CD4-positive, alpha-beta T cell (primary cell): ENCODE measurements at regions of chr6 and their contacts with region 1.

Region 1: GRCh38 chr6:26537846-26538571 is at the start of gene HMGN4:
- DNase-seq: peak; percentile 66 to 97 (median 76)
- ATAC-seq: peak; percentile 70
- H3K4me3 ChIP-seq: peak within 1 kb of the TSS; percentile 93
- H3K4me3 Mint-ChIP-seq: peak within 1 kb of the TSS; percentile 94
- H3K27ac ChIP-seq: peak within 1 kb of the TSS; percentile 84 to 91
- H3K27ac Mint-ChIP-seq: peak within 1 kb of the TSS; percentile 98
- H3K4me1 ChIP-seq: peaks cover 51% of the 10 kb centered on the region
- H3K4me1 Mint-ChIP-seq: peaks cover 57% of the 10 kb centered on the region
- H3K27me3 ChIP-seq: no peaks in the 10 kb centered on the region
- H3K27me3 Mint-ChIP-seq: peaks cover 13% of the 10 kb centered on the region
- CTCF ChIP-seq: no peak
- total RNA-seq, gene HMGN4: 22.7 to 24.8 TPM

Region 2: GRCh38 chr6:26175428-26176181 is 362.4 kb before region 1 on chr6:
- CTCF ChIA-PET with region 1: no interaction called
- POLR2A ChIA-PET with region 1: interaction called, 18 read pairs
- intact Hi-C with region 1: no loop called
- DNase-seq: peak in 11 of 14 experiments; percentile 13 to 85 (median 54)
- ATAC-seq: no peak
- H3K4me3 ChIP-seq: no peak overlapping the region
- H3K4me3 Mint-ChIP-seq: peak overlapping the region; percentile 83
- H3K27ac ChIP-seq: peak overlapping the region in 1 of 2 donors; percentile 41
- H3K27ac Mint-ChIP-seq: peak overlapping the region; percentile 93
- H3K4me1 ChIP-seq: peaks cover 17% of the 10 kb centered on the region
- H3K4me1 Mint-ChIP-seq: peaks cover 53% of the 10 kb centered on the region
- H3K27me3 ChIP-seq: no peaks in the 10 kb centered on the region
- H3K27me3 Mint-ChIP-seq: no peaks in the 10 kb centered on the region
- CTCF ChIP-seq: peak; percentile 87

Region 3: GRCh38 chr6:26285143-26286134 is 252.6 kb before region 1 on chr6:
- CTCF ChIA-PET with region 1: no interaction called
- POLR2A ChIA-PET with region 1: interaction called, 15 read pairs
- intact Hi-C with region 1: no loop called
- DNase-seq: peak; percentile 85 to 99 (median 92)
- ATAC-seq: peak; percentile 82
- H3K4me3 ChIP-seq: peak overlapping the region; percentile 62
- H3K4me3 Mint-ChIP-seq: peak overlapping the region; percentile 87
- H3K27ac ChIP-seq: peak overlapping the region; percentile 82 to 85
- H3K27ac Mint-ChIP-seq: peak overlapping the region; percentile 96
- H3K4me1 ChIP-seq: peaks cover 16% of the 10 kb centered on the region
- H3K4me1 Mint-ChIP-seq: peaks cover 24% of the 10 kb centered on the region
- H3K27me3 ChIP-seq: no peaks in the 10 kb centered on the region
- H3K27me3 Mint-ChIP-seq: peaks cover 11% of the 10 kb centered on the region
- CTCF ChIP-seq: no peak

Region 4: GRCh38 chr6:26363882-26364701 is 173.9 kb before region 1 on chr6:
- CTCF ChIA-PET with region 1: no interaction called
- POLR2A ChIA-PET with region 1: interaction called, 17 read pairs
- intact Hi-C with region 1: no loop called
- DNase-seq: peak in 5 of 14 experiments; percentile 4 to 64 (median 47)
- ATAC-seq: peak; percentile 21
- H3K4me3 ChIP-seq: peak overlapping the region; percentile 91
- H3K4me3 Mint-ChIP-seq: no peak overlapping the region
- H3K27ac ChIP-seq: peak overlapping the region; percentile 93 to 94
- H3K27ac Mint-ChIP-seq: no peak overlapping the region
- H3K4me1 ChIP-seq: peaks cover 40% of the 10 kb centered on the region
- H3K4me1 Mint-ChIP-seq: peaks cover 53% of the 10 kb centered on the region
- H3K27me3 ChIP-seq: no peaks in the 10 kb centered on the region
- H3K27me3 Mint-ChIP-seq: no peaks in the 10 kb centered on the region
- CTCF ChIP-seq: no peak

Region 5: GRCh38 chr6:26507658-26508057 is 30.4 kb before region 1 on chr6:
- CTCF ChIA-PET with region 1: no interaction called
- POLR2A ChIA-PET with region 1: no interaction called
- intact Hi-C with region 1: no loop called
- DNase-seq: no peak
- ATAC-seq: no peak
- H3K4me3 ChIP-seq: no peak overlapping the region
- H3K4me3 Mint-ChIP-seq: no peak overlapping the region
- H3K27ac ChIP-seq: no peak overlapping the region
- H3K27ac Mint-ChIP-seq: no peak overlapping the region
- H3K4me1 ChIP-seq: no peaks in the 10 kb centered on the region
- H3K4me1 Mint-ChIP-seq: no peaks in the 10 kb centered on the region
- H3K27me3 ChIP-seq: peaks cover 0 to 16% of the 10 kb centered on the region in 2 experiments
- H3K27me3 Mint-ChIP-seq: peaks cover 22% of the 10 kb centered on the region
- CTCF ChIP-seq: no peak

Region 6: DNA sequence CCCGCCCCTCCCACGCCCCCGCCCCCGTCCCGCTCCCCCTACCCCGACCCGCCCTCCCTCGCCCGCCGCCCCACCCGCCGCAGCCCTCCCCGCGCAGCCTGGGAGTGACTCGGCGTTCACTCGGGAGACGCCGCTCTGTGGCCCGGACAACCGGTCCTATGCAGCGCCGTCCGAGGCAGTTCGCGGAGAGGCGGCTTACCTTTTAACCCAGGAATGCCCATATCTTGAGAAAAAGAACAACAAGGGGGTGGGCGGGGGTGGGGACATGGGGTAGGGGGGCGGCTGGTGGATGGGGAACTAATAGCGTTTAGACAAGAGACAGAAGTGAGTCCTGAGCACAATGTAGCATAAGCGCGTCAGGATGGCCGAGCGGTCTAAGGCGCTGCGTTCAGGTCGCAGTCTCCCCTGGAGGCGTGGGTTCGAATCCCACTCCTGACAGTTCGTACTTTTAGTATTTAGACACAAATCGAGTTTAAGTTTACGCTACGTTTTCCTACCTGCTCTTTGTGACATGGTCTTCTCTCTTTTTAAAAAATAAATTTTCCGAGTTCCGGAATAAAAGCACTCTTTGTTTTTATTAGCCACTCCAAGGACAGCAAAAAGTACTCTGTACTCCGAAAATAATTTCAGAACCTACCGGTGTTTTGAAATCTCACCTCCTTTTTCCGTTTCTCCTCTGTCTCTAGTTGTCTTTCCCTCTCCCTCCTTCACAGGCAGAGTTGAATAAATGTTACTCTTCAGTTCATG is 17.0 kb before region 1 on chr6:
- CTCF ChIA-PET with region 1: interaction called, 15 read pairs
- POLR2A ChIA-PET with region 1: interaction called, 80 read pairs
- intact Hi-C with region 1: loop called (anchors 1 kb)
- DNase-seq: peak; percentile 77 to 93 (median 84)
- ATAC-seq: peak; percentile 81
- H3K4me3 ChIP-seq: peak overlapping the region; percentile 65
- H3K4me3 Mint-ChIP-seq: peak overlapping the region; percentile 89
- H3K27ac ChIP-seq: peak overlapping the region; percentile 50 to 61
- H3K27ac Mint-ChIP-seq: peak overlapping the region; percentile 99
- H3K4me1 ChIP-seq: peaks cover 10% of the 10 kb centered on the region
- H3K4me1 Mint-ChIP-seq: peaks cover 30% of the 10 kb centered on the region
- H3K27me3 ChIP-seq: no peaks in the 10 kb centered on the region
- H3K27me3 Mint-ChIP-seq: peaks cover 9% of the 10 kb centered on the region
- CTCF ChIP-seq: no peak

Region 7: GRCh38 chr6:27472617-27473400 is 934.8 kb after region 1 on chr6 and contains the start of gene ZNF184:
- CTCF ChIA-PET with region 1: no interaction called
- POLR2A ChIA-PET with region 1: no interaction called
- intact Hi-C with region 1: loop called in 1 of 2 experiments (anchors 10 kb)
- DNase-seq: peak; percentile 68 to 94 (median 80)
- ATAC-seq: peak; percentile 59
- H3K4me3 ChIP-seq: peak within 1 kb of the TSS; percentile 85
- H3K4me3 Mint-ChIP-seq: peak within 1 kb of the TSS; percentile 88
- H3K27ac ChIP-seq: peak within 1 kb of the TSS; percentile 88 to 96
- H3K27ac Mint-ChIP-seq: peak within 1 kb of the TSS; percentile 91
- H3K4me1 ChIP-seq: peaks cover 21% of the 10 kb centered on the region
- H3K4me1 Mint-ChIP-seq: peaks cover 53% of the 10 kb centered on the region
- H3K27me3 ChIP-seq: no peaks in the 10 kb centered on the region
- H3K27me3 Mint-ChIP-seq: no peaks in the 10 kb centered on the region
- CTCF ChIP-seq: no peak
- total RNA-seq, gene ZNF184: 19.6 to 21.1 TPM